HEK293 (cell line): ENCODE measurements at regions of chr18 and their contacts with region 1.

Region 1: GRCh38 chr18:37476182-37476581 is 89.4 kb downstream of the CELF4 start:
- H3K4me3 ChIP-seq: no peak overlapping the region
- H3K27ac ChIP-seq: no peak overlapping the region
- H3K4me1 ChIP-seq: no peaks in the 10 kb centered on the region
- CTCF ChIP-seq: peak; percentile 43

Region 2: DNA sequence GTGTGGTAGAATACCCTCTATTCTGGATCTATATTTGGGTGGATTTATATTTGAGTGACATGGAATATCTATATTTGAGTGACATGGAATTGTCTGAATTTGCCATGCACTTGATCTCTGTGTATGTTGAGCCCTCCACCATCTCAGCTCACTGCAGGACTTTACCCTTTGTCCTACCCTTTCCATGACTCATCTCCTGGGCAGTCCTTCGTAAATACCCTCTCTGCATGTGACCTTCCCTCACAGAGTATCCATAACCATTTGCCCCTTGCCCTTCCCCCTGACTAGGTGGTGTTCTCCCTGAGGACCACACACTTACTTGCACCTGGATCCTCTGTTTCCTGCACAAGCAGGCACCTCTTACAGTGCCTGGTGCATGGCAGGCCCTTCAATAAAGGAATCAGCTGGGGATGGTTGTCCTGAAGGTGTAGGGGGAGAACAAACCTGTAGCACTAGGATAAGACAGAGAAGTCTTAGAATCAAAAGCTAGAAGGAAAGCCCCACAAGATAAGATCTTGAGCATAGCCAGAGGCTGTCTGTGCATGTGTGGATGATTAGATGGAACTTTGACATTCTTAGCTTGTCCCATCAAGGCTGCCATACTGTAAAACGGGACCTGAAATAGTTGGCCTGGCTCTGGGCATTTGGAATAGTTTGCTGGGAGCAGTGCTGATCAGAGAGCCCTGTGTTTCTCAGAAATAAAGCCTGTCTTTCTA is 948.3 kb before region 1 on chr18:
- CTCF ChIA-PET with region 1: no interaction called
- POLR2A ChIA-PET with region 1: no interaction called
- H3K4me3 ChIP-seq: no peak overlapping the region
- H3K27ac ChIP-seq: no peak overlapping the region
- H3K4me1 ChIP-seq: no peaks in the 10 kb centered on the region
- CTCF ChIP-seq: no peak

Region 3: DNA sequence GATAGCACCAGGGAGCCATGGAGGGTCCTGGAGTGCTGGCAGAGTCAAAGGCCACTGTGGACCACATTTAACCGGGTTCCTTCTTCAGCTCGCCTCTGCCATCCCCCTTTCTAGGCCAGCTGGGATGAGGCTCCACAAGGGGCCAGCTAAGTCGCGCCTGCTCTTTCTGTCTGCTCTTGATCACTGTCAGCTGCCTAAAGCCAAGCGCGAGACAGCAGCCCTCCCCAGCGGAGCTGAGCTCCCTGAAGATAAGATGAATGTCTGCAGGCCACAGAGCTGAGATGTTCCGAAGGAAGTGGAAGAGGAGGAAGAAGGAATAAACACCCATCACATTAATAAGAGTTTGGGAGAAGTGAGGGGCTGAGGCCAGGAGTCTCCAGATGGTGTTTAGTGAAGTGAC is 10.2 kb before region 1 on chr18:
- CTCF ChIA-PET with region 1: interaction called, 12 read pairs
- POLR2A ChIA-PET with region 1: no interaction called
- H3K4me3 ChIP-seq: no peak overlapping the region
- H3K27ac ChIP-seq: no peak overlapping the region
- H3K4me1 ChIP-seq: no peaks in the 10 kb centered on the region
- CTCF ChIP-seq: no peak